ENCODE measurements at regions of chr14 and their contacts with region 1.

Region 1: DNA sequence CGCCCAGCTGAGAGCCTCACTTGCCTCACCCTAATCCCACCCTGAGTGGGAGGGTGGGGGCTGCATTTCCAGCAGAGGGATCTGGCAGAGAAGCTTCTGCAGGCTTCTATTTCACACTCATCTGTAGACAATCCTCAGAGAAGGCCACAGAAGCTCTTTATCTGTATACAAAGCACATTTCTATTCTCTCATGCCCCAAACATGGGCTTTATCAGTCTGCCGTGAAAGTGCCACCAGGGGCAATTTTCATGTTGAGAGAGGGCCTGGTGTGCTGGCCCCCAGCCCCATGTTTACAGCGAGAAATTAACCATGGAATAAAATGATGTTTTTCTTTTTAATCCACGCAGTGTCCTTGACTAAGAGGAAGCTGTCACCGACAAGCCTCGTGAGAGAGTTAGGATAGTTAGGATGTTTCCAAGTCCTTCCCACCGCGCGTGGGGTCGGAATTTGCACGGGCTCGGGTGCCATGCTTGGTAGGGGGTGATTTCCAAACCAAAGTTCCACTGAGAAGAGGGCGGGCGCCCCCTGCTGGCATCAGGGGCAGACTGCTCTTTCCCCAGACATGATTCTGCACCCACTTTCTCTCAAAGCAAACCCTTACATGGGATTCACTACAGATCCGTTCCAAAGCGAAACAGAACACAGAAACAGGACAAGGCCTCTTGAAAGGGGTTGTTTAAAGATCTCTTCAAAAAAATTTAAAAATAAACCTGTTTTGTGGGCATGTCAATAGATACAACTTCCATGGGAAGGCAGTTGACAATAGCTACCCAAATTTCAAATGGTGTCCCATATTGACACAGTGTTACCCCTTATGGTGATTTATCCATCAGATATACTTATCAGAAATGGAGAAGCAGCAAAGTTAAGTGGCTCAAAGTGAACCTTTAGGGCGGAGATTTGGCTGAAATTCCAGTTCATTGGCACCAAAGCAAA is 19.4 kb downstream of the BDKRB1 start:
- DNase-seq: peak; percentile 52
- H3K4me3 ChIP-seq: no peak overlapping the region
- CTCF ChIP-seq: peak; percentile 97

Region 2: DNA sequence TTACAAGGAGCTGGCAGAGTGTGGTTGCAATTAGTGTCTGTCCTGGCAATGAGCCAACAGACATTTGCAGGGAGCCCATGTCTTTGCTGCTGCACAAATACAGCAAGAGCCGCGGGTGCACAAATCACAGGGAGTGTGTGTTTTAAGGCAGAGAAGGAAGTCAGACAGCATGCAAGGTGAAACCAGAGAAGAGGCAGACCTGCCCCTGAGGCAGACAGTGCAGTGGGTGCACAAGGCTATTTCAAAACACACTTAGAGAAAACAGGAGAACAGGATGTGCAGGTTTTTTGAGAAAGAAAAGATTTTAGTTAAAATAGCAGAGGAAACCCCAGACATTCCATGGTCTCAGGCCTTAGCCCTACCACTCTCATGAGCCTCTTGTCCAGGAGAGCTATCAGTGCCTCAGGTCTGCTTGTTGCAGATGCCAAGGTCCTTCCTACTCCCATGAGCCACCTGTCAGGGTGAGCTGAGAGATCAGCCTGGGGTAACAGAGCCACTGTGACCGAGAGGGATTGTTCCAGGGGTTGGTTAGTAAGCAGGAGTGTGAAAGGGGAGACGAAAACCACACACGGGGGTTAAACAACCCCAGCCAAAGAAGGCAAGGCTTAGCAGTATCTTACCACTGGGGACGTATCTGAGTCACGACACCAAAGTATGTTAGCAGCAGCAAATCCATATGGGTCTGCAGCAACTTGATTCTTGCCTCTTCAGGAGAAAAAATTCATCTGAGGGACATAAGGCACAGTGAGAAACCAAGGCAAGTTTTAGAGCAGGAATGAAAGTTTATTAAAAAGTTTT is 158.1 kb before region 1 on chr14:
- CTCF ChIA-PET with region 1: interaction called, 33 read pairs
- POLR2A ChIA-PET with region 1: no interaction called
- DNase-seq: no peak
- H3K4me3 ChIP-seq: no peak overlapping the region
- CTCF ChIP-seq: peak; percentile 16

Region 3: GRCh38 chr14:96204151-96205058 is 71.0 kb before region 1 on chr14 and contains the start of gene BDKRB2:
- CTCF ChIA-PET with region 1: interaction called, 10 read pairs
- POLR2A ChIA-PET with region 1: no interaction called
- DNase-seq: peak; percentile 31
- H3K4me3 ChIP-seq: peak within 1 kb of the TSS; percentile 71
- CTCF ChIP-seq: no peak

Region 4: DNA sequence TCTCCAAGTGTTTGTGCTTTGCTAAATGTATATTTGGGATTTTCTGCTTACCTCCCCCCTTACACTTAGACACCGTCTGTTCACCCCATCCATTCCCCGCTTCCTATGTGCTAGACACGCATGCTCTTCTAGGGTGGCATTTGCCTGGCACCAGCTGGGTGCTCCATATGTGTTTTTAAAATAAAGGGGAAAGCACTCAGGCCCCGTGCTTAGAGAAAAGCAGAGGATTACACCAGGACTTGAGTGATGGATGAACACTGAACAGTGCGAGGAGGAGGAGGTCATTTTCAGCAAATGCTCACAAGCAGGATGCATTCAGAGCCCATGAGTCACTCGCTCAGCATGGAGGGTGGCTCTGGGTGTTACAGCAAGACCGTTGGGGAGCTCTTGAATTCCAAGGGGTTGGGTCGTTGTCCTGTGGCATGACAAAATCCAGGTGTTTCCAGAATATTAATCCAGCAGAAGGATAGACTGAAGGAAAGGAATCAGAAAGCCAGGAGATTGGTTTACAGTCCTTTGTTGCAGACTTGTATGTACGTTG is 22.4 kb before region 1 on chr14:
- CTCF ChIA-PET with region 1: interaction called, 73 read pairs
- POLR2A ChIA-PET with region 1: interaction called, 5 read pairs
- DNase-seq: peak; percentile 81
- H3K4me3 ChIP-seq: no peak overlapping the region; the same call in 1 of the 2 replicates
- CTCF ChIP-seq: no peak

Region 5: DNA sequence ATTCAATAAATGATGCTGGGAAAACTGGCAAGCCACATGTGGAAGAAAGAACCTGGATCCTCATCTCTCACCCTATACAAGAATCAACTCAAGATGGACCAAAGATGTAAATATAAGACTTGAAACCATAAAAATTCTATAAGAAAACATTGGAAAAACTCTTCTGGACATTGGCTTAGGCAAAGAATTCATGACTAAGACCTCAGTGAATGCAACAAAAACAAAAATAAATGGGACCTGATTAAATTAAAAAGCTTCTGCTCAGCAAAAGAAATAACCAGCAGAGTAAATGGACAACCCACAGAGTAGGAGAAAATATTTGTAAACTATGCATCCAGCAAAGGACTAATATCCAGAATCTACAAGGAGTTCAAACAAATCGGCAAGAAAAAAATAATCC is 63.1 kb after region 1 on chr14:
- CTCF ChIA-PET with region 1: no interaction called
- POLR2A ChIA-PET with region 1: no interaction called
- DNase-seq: no peak
- H3K4me3 ChIP-seq: no peak overlapping the region
- CTCF ChIP-seq: no peak

Region 6: GRCh38 chr14:96424109-96424989 is 148.9 kb after region 1 on chr14:
- CTCF ChIA-PET with region 1: interaction called, 19 read pairs
- POLR2A ChIA-PET with region 1: no interaction called
- DNase-seq: peak; percentile 16
- H3K4me3 ChIP-seq: peak overlapping the region; percentile 52
- CTCF ChIP-seq: peak; percentile 55